Activated CD4-positive, alpha-beta T cell treated with anti-CD3 and anti-CD28 coated beads, Interleukin-2, amount 10 ng/mL, durations not matched to agents 7 days and 5 days (primary cell): ENCODE measurements at regions of chr3 and their contacts with region 1.

Region 1: GRCh38 chr3:182971637-182972036 is 8.7 kb downstream of the DCUN1D1 start:
- DNase-seq: no peak
- H3K4me3 Mint-ChIP-seq: no peak overlapping the region
- H3K27ac Mint-ChIP-seq: no peak overlapping the region
- H3K4me1 Mint-ChIP-seq: peaks cover 52% of the 10 kb centered on the region
- H3K27me3 Mint-ChIP-seq: no peaks in the 10 kb centered on the region

Region 2: DNA sequence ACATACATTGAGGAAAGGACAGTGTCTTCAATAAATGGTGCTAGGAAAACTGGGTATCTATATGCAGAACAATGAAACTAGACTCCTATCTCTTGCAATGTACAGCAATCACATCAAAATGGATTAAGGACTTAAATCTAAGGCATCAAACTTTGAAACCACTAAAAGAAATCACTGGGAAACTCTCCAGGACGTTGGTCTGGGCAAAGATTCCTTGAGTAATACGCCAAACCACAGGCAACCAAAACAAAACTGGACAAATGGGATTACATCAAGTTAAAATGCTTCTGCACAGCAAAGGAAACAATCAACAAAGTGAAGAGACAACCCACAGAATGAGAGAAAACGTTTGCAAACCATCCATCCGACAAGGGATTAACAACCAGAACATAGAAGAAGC is 176.4 kb after region 1 on chr3:
- CTCF ChIA-PET with region 1: no interaction called
- POLR2A ChIA-PET with region 1: interaction called, 10 read pairs
- DNase-seq: no peak
- H3K4me3 Mint-ChIP-seq: no peak overlapping the region
- H3K27ac Mint-ChIP-seq: no peak overlapping the region
- H3K4me1 Mint-ChIP-seq: no peaks in the 10 kb centered on the region
- H3K27me3 Mint-ChIP-seq: no peaks in the 10 kb centered on the region

Region 3: GRCh38 chr3:183252973-183253901 is 281.6 kb after region 1 on chr3 and contains the start of gene B3GNT5:
- CTCF ChIA-PET with region 1: no interaction called
- POLR2A ChIA-PET with region 1: no interaction called
- DNase-seq: peak; percentile 30
- H3K4me3 Mint-ChIP-seq: peak within 1 kb of the TSS; percentile 71
- H3K27ac Mint-ChIP-seq: no peak within 1 kb of the TSS
- H3K4me1 Mint-ChIP-seq: peaks cover 12% of the 10 kb centered on the region
- H3K27me3 Mint-ChIP-seq: peaks cover 16% of the 10 kb centered on the region
- total RNA-seq, gene B3GNT5: 0.67 to 0.71 TPM

Region 4: GRCh38 chr3:183298701-183299153 is 327.1 kb after region 1 on chr3:
- CTCF ChIA-PET with region 1: no interaction called
- POLR2A ChIA-PET with region 1: no interaction called
- DNase-seq: no peak
- H3K4me3 Mint-ChIP-seq: no peak overlapping the region
- H3K27ac Mint-ChIP-seq: no peak overlapping the region
- H3K4me1 Mint-ChIP-seq: peaks cover 15% of the 10 kb centered on the region
- H3K27me3 Mint-ChIP-seq: no peaks in the 10 kb centered on the region